Naive thymus-derived CD4-positive, alpha-beta T cell (primary cell): ENCODE measurements at regions of chr2 and their contacts with region 1.

Region 1: DNA sequence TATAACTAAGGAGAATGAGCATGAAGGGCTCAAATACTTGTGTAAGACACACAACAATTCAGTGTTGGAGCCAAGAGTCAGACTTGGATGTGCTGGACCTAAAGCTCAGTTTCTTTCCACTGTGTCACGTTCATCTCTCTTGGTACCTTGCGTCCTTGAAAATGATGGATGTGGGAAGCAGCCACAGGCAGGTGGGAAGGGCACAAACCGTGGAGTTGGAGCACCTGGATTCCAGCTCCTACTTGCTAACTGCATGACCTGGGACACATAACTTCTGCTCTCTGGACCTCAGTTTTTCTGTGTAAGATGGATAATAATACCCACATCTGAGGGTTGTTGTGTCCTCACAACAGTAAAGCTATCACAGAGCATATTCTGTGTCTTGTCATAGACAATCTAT is 53.1 kb upstream of the PPP1CB start:
- DNase-seq: no peak
- ATAC-seq: no peak
- H3K4me3 ChIP-seq: no peak overlapping the region
- H3K4me3 Mint-ChIP-seq: no peak overlapping the region
- H3K27ac ChIP-seq: no peak overlapping the region
- H3K27ac Mint-ChIP-seq: no peak overlapping the region
- H3K4me1 ChIP-seq: no peaks in the 10 kb centered on the region
- H3K4me1 Mint-ChIP-seq: peaks cover 0 to 6% (median 0%) of the 10 kb centered on the region in 7 donors
- H3K27me3 ChIP-seq: no peaks in the 10 kb centered on the region
- H3K27me3 Mint-ChIP-seq: no peaks in the 10 kb centered on the region

Region 2: DNA sequence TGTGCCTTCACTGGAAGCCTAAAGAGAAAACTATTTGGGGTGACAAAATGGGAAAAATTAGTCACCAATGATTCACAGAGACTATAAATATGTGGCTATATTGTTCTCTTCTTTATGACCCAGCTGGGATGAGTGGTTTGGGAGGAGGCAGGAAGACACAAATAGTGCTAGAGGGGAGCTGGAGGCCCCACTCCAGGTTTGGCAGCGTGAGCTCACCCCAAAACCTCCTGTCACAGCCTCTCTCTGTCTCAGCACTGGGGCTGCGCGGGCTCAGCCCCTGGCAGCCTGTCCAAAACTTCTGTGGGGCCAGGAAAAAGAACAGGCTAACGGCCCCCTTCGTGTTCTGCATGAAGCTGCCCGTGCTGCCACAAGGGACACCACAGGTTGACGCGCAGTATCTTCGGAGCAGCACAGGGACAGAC is 1675.3 kb after region 1 on chr2:
- CTCF ChIA-PET with region 1: interaction called, 10 read pairs
- POLR2A ChIA-PET with region 1: no interaction called
- intact Hi-C with region 1: no loop called
- DNase-seq: no peak
- ATAC-seq: no peak
- H3K4me3 ChIP-seq: no peak overlapping the region
- H3K4me3 Mint-ChIP-seq: no peak overlapping the region
- H3K27ac ChIP-seq: no peak overlapping the region
- H3K27ac Mint-ChIP-seq: peak overlapping the region in 1 of 9 donors; percentile 60
- H3K4me1 ChIP-seq: no peaks in the 10 kb centered on the region
- H3K4me1 Mint-ChIP-seq: peaks cover 0 to 11% (median 5%) of the 10 kb centered on the region in 7 donors
- H3K27me3 ChIP-seq: no peaks in the 10 kb centered on the region
- H3K27me3 Mint-ChIP-seq: no peaks in the 10 kb centered on the region